A549 (cell line): ENCODE measurements at regions of chr9 and their contacts with region 1.

Region 1: DNA sequence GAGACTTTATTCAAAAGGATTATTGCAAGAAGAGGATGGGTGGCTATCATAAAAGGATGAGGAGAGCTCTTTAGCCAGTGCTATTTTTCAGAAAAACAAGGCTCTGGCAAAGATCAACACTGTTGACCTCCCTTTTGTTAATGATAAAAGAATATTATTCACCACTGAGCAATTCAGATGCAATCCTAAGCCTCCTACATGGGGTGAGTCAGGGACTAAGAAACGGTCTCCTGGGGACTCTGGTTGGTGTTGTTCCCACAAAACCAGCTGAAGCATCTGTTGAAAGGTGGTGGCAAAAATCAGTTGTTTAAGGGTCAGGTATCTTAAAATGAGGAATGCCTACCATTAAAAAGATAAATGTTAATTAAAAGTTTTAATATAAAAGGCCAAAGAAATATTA is 7.7 kb upstream of the GCNT1 start:
- DNase-seq: peak in 1 of 2 experiments; percentile 18
- ATAC-seq: peak in 1 of 2 experiments; percentile 46; a peak in 2 of 6 replicates
- H3K4me3 ChIP-seq: no peak overlapping the region
- H3K27ac ChIP-seq: no peak overlapping the region
- H3K4me1 ChIP-seq: peaks cover 18% of the 10 kb centered on the region
- CTCF ChIP-seq: no peak
- EP300 ChIP-seq: no peak
- POLR2A ChIP-seq: no peak
- RAD21 ChIP-seq: no peak

Region 2: GRCh38 chr9:76433836-76434235 is 17.4 kb before region 1 on chr9:
- CTCF ChIA-PET with region 1: interaction called, 11 read pairs
- POLR2A ChIA-PET with region 1: no interaction called
- DNase-seq: no peak
- ATAC-seq: peak; percentile 69 to 80
- H3K4me3 ChIP-seq: no peak overlapping the region
- H3K27ac ChIP-seq: peak overlapping the region; percentile 13 to 78; a peak in 3 of 6 replicates
- H3K4me1 ChIP-seq: peaks cover 12% of the 10 kb centered on the region
- CTCF ChIP-seq: no peak
- EP300 ChIP-seq: no peak
- POLR2A ChIP-seq: no peak
- RAD21 ChIP-seq: no peak

Region 3: DNA sequence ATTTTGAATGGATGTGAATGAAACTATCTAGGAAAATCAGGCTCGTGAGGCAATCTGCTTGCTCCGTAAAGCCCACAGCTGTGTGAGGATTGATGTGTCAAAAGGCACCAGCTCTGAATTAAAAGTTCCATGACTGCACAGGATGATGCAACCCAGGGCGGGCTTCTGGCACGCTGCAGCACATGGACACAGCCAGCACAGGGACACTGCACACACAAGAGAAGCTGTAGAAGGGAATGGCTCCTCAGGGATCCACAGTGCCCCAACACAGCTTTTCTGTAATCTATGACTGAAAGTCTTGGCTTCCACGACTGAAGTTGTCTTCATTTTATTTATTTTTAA is 158.7 kb after region 1 on chr9:
- CTCF ChIA-PET with region 1: no interaction called
- POLR2A ChIA-PET with region 1: no interaction called
- DNase-seq: no peak
- ATAC-seq: no peak
- H3K4me3 ChIP-seq: no peak overlapping the region
- H3K27ac ChIP-seq: no peak overlapping the region
- H3K4me1 ChIP-seq: no peaks in the 10 kb centered on the region
- CTCF ChIP-seq: no peak
- EP300 ChIP-seq: no peak
- POLR2A ChIP-seq: no peak
- RAD21 ChIP-seq: no peak

Region 4: DNA sequence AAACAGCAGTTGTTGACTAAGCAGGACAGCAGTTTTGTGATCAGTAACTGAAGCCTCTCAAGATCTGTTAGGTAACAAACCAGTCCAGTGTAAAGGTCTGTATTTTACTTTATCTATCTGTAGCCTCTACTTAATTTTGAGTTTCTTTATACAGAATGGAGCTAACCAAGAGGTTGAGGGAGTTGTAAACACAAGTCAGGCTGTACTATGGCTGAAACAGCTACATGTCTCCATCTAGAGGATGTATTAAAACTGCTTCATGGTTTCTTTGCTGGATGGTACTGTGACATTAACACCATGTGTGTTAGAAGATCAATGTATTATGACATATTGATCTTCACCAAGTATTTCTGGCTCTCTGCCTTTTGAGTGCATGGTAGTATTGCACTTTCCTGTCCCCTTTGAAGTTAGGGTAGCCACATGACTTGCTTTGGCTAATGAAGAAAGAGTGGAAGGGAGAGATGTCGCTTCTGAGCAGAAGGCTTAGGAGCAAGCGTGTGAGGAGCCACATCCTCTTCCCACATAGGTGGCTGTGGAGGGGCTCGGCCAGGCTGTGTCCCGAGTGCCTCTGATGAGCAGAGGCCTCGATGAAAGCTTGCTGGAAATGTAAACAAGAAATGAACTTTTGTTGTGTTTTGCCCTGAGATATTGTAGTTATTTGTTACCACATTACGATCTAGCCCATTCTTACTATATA is 207.4 kb after region 1 on chr9:
- CTCF ChIA-PET with region 1: interaction called, 28 read pairs
- POLR2A ChIA-PET with region 1: no interaction called
- DNase-seq: peak; percentile 35 to 37
- ATAC-seq: peak; percentile 92
- H3K4me3 ChIP-seq: no peak overlapping the region
- H3K27ac ChIP-seq: no peak overlapping the region
- H3K4me1 ChIP-seq: no peaks in the 10 kb centered on the region
- CTCF ChIP-seq: peak; percentile 62
- EP300 ChIP-seq: no peak
- POLR2A ChIP-seq: no peak
- RAD21 ChIP-seq: peak; percentile 65 to 73

Region 5: DNA sequence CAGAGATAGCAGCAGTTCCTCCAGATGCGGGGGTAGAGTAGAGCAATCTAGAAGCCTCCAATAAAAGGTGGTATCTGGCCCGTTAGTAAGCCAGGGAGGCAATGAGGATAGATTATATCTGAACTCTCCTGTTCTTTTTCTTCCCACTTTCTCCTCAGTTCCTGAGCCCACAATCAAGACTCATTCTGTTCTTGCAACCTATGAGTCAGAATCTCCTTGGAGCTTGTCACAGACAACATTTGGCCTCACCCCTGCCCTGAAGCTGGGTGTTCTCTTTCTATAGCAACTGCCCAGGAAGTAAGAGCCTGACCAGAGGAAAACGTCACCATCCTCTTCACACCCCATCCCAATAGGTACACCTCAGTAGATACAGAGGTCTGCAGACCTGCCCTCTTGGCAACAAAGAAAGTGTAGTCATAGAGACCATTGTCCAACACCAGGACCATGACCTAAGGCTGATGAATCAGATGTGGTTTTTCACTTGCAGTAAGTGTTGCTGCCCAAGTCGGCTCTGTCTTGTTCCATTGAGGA is 236.7 kb after region 1 on chr9:
- CTCF ChIA-PET with region 1: interaction called, 12 read pairs
- POLR2A ChIA-PET with region 1: no interaction called
- DNase-seq: peak in 1 of 2 experiments; percentile 18
- ATAC-seq: peak; percentile 49 to 60; a peak in 5 of 6 replicates
- H3K4me3 ChIP-seq: no peak overlapping the region
- H3K27ac ChIP-seq: no peak overlapping the region
- H3K4me1 ChIP-seq: no peaks in the 10 kb centered on the region
- CTCF ChIP-seq: no peak
- EP300 ChIP-seq: no peak
- POLR2A ChIP-seq: no peak
- RAD21 ChIP-seq: no peak